Posterior vena cava (tissue), 2 donors: ENCODE measurements at regions of chr4 and their contacts with region 1.

Region 1: GRCh38 chr4:147958489-147959065 is 226.7 kb downstream of the ARHGAP10 start:
- DNase-seq: no peak

Region 2: GRCh38 chr4:146927695-146928094 is 1030.9 kb before region 1 on chr4:
- intact Hi-C with region 1: no loop called
- DNase-seq: no peak

Region 3: DNA sequence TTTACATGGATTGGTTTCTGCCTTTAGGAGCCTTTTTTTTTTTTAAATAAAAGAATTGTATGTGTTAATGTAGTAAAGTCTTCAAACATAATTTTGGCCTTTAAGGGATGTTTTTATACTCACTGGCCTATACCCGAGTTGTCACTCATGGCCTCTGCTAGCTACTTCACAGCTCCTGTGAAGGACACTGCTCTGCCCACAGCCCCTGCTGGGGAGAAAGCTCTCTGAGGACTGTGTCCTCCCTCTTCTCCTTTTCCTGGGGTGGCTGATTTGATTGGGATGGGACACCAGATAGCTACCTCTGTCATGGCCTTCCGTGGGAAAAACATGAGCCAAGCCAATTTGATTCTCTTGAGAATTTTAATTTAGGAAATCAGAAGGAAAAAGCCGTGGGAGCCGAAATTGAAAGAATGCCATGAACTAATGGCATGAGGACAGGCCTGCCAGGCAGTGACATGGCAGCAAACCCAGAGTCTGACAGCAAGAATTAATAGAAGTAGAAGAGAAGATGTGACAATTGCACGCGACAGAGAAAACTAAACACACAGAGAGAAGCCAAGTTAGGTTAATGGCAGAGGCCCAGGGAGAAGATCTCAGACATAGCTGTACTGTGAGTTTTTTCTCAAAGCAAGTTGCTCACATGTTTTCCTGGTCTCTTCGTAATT is 145.3 kb before region 1 on chr4:
- intact Hi-C with region 1: no loop called
- DNase-seq: no peak

Region 4: GRCh38 chr4:147909225-147909624 is 49.4 kb before region 1 on chr4:
- intact Hi-C with region 1: loop called in 1 of 2 experiments (anchors 2 kb)
- DNase-seq: no peak

Region 5: DNA sequence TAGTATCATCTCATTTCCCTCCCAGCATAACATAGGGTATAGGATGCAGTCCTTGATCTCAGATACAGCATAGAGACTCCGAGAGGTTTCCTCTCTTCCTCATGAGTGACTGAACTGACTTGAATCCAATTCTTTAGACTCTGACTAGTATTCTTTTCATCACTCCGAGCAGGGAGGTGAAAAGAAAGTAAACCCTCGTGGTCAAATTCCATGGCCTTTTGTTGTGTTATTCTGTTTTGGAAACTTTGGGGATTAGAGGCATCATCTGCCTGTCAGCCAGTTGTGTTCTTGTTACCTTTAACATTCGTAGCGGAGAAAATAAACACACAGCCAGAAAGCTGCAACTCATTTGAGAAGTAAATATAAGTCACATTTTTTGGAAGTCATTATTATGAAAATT is 20.1 kb before region 1 on chr4:
- intact Hi-C with region 1: loop called in 1 of 2 experiments (anchors 2 kb)
- DNase-seq: no peak